Transverse colon (tissue), 4 donors: ENCODE measurements at regions of chr1 and their contacts with region 1.

Region 1: GRCh38 chr1:27044613-27045151 is 32.0 kb upstream of the TENT5B start:
- DNase-seq: peak; percentile 91
- H3K4me3 ChIP-seq: peak overlapping the region in 1 of 4 donors; percentile 33
- H3K27ac ChIP-seq: no peak overlapping the region
- H3K4me1 ChIP-seq: peaks cover 3 to 20% (median 5%) of the 10 kb centered on the region in 4 donors
- H3K27me3 ChIP-seq: no peaks in the 10 kb centered on the region
- CTCF ChIP-seq: peak; percentile 97 to 99 (median 97)
- EP300 ChIP-seq: no peak
- POLR2A ChIP-seq: no peak

Region 2: DNA sequence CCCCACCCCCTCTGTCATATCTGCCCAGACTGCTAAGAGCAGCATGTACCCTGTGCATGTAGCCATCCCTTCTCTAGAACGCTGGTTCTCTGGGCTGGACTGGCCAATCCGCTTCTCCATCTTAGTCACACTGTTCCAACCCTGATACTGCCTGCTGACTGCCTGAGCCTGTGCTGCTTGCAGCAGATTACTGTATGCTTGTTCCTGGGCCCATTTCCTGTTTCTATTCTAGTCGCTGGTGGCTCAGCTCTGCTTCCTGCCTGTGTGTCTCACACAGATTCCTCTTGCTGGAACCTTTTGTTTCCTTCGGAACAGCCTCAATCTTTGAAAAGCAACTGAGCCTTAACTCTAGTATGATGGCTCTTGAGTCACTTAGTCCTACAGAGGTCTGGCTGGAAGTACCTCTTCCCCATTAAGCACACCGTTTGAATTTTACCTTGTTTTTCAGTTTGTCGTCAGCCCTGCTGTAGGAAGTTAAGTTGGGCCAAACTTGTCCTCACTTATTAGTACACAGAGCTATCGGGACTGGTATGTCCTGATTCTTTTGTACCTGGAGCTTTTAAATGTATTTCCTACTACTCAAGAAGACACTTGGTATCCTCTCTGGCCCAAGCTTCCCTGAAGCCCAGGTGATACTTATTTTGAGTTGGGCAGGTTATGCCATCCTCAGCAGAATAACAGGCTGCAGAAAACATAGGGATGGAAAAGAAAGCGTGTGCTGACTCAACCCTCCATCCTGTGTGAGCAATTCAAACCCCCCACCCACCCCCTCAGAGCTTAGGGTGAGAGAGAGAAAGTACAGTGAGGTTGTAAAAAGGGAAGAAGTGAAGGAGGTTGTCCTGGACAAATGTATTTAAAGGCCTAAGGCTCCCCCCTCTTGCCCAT is 300.4 kb before region 1 on chr1:
- in situ Hi-C with region 1: no loop called
- intact Hi-C with region 1: no loop called
- DNase-seq: peak; percentile 81
- H3K4me3 ChIP-seq: no peak overlapping the region
- H3K27ac ChIP-seq: peak overlapping the region; percentile 71 to 74 (median 72)
- H3K4me1 ChIP-seq: peaks cover 16 to 67% (median 31%) of the 10 kb centered on the region in 4 donors
- H3K27me3 ChIP-seq: no peaks in the 10 kb centered on the region
- CTCF ChIP-seq: no peak
- EP300 ChIP-seq: no peak
- POLR2A ChIP-seq: no peak

Region 3: DNA sequence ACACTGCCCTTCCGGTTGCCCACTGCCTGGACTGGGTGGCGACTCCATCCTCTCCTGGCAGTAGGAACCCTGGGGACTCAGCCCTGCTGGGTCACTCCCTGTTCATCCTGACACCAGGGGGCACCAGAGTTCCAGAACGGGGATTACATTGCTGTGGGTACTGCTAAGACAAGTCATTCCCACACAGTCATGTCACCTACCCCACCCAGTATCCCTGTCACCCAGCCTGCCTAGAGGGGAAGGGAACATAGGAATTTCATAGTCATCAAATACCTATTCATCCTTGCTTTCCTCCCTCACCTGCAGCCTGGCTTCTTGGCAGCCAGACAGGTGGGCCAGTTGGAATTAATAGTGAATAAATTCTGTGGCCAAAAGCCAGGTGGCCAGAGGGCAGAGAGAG is 191.5 kb before region 1 on chr1:
- in situ Hi-C with region 1: no loop called
- intact Hi-C with region 1: no loop called
- DNase-seq: peak; percentile 95
- H3K4me3 ChIP-seq: no peak overlapping the region
- H3K27ac ChIP-seq: peak overlapping the region; percentile 36 to 60 (median 55)
- H3K4me1 ChIP-seq: peaks cover 30 to 53% (median 38%) of the 10 kb centered on the region in 4 donors
- H3K27me3 ChIP-seq: no peaks in the 10 kb centered on the region
- CTCF ChIP-seq: peak; percentile 78 to 92 (median 83)
- EP300 ChIP-seq: no peak
- POLR2A ChIP-seq: no peak

Region 4: GRCh38 chr1:26993237-26994019 is 51.3 kb before region 1 on chr1 and contains the start of gene TRNP1:
- in situ Hi-C with region 1: no loop called
- intact Hi-C with region 1: loop called (anchors 2 kb)
- DNase-seq: peak; percentile 53
- H3K4me3 ChIP-seq: peak within 1 kb of the TSS; percentile 45 to 90 (median 68)
- H3K27ac ChIP-seq: peak within 1 kb of the TSS; percentile 67 to 83 (median 77)
- H3K4me1 ChIP-seq: peaks cover 5 to 26% (median 17%) of the 10 kb centered on the region in 4 donors
- H3K27me3 ChIP-seq: peaks cover 65% of the 10 kb centered on the region
- CTCF ChIP-seq: no peak
- EP300 ChIP-seq: no peak
- POLR2A ChIP-seq: peak; percentile 38
- total RNA-seq, gene TRNP1: 0.80 to 4.1 (median 2.3) TPM in 3 of 4 donors, not detected in the other

Region 5: DNA sequence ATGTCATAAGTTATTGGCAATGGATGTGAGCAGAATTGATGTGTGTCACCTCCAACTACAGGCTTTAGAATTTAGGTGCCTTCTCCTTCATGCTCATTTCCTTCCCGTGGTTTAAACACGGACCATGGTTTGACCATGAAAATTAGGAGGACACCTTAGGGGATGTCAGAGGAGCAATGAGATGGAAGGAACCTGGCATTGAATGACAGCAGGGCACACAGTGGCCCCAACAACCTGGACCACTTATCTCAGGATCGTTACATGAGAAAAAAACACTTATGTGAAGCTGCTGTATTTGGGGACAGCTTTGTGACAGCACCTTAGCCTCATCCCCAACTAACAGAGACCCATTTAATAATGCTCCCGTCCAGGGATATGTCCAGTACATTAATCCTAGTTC is 39.4 kb after region 1 on chr1:
- in situ Hi-C with region 1: no loop called
- intact Hi-C with region 1: loop called (anchors 5 kb)
- DNase-seq: no peak
- H3K4me3 ChIP-seq: no peak overlapping the region
- H3K27ac ChIP-seq: no peak overlapping the region
- H3K4me1 ChIP-seq: no peaks in the 10 kb centered on the region
- H3K27me3 ChIP-seq: no peaks in the 10 kb centered on the region
- CTCF ChIP-seq: no peak
- EP300 ChIP-seq: no peak
- POLR2A ChIP-seq: no peak

Region 6: DNA sequence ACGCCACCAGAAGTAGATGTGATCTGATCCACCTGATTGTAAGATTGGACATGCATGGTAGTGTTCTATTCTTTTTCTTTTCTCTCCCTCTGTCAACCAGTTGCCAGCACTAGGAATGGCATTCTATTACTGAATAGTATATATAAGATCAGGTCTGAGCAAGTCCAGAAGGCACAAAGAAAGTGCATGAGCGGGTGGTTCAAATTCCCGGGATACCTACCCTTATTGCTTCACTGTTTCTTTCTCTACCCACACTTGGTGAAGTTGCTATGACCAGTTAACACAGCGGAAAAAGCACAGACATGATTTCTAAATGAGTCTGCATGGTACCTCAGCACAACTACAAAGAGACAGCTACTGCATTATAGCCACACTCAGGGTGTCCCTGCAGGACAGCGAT is 46.2 kb after region 1 on chr1:
- in situ Hi-C with region 1: loop called (anchors 5 to 10 kb)
- intact Hi-C with region 1: no loop called
- DNase-seq: no peak
- H3K4me3 ChIP-seq: no peak overlapping the region
- H3K27ac ChIP-seq: no peak overlapping the region
- H3K4me1 ChIP-seq: no peaks in the 10 kb centered on the region
- H3K27me3 ChIP-seq: no peaks in the 10 kb centered on the region
- CTCF ChIP-seq: no peak
- EP300 ChIP-seq: no peak
- POLR2A ChIP-seq: no peak

Region 7: DNA sequence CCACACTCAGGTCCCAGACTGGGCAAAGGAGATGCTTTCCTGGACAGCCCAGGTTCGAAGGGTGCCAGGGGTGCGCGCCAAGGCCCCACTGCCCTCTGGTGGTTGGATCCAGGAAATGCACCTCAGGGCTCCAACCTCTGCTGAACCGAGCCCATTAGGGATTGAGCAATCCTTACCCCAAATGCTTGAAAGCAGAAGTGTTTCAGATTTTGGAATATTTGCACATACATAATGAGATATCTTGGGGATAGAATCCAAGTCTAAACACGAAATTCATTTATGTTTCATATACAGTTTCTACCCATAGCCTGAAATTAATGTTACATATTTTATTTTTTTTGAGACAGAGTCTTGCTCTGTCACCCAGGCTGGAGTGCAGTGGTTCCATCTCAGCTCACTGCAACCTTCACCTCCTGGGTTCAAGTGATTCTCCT is 52.8 kb after region 1 on chr1:
- in situ Hi-C with region 1: loop called (anchors 5 to 10 kb)
- intact Hi-C with region 1: loop called (anchors 2 kb)
- DNase-seq: peak; percentile 84
- H3K4me3 ChIP-seq: no peak overlapping the region
- H3K27ac ChIP-seq: no peak overlapping the region
- H3K4me1 ChIP-seq: peaks cover 10 to 27% (median 18%) of the 10 kb centered on the region in 4 donors
- H3K27me3 ChIP-seq: no peaks in the 10 kb centered on the region
- CTCF ChIP-seq: peak; percentile 94 to 97 (median 97)
- EP300 ChIP-seq: no peak
- POLR2A ChIP-seq: no peak